ENCODE measurements at regions of chr10 and their contacts with region 1.

Region 1: GRCh38 chr10:119080521-119081260 is at the start of gene EIF3A:
- DNase-seq: peak; percentile 81 to 92
- ATAC-seq: peak; percentile 87 to 90
- H3K4me3 ChIP-seq: peak within 1 kb of the TSS; percentile 77 to 94 (median 92)
- H3K27ac ChIP-seq: peak within 1 kb of the TSS; percentile 95 to 99 (median 97)
- H3K4me1 ChIP-seq: peaks cover 30 to 32% of the 10 kb centered on the region in 2 donors
- H3K27me3 ChIP-seq: no peaks in the 10 kb centered on the region
- CTCF ChIP-seq: peak in 1 of 5 experiments; percentile 9
- POLR2A ChIP-seq: peak; percentile 96 to 97
- total RNA-seq, gene EIF3A: 136 to 240 (median 191) TPM

Region 2: DNA sequence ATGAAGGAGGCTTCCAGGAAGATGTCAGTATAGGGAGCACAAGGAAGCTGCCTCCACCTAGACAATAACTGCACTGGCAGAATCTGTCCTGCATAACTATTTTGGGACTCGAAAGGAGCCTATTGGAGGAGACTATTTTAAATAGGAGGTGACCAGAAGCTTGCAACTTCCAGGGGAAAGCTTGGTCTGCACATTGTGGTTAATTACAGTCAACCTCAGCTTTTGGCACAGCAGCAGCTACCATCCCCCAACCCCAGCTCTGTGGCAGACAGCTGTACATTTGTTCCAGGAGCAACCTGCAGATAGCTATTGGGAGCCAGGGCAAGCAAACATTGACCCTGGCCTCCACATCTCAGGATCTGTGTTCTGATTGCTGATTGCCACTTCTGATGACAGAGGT is 97.4 kb before region 1 on chr10:
- in situ Hi-C with region 1: no loop called
- intact Hi-C with region 1: no loop called
- DNase-seq: no peak
- ATAC-seq: no peak
- H3K4me3 ChIP-seq: no peak overlapping the region
- H3K27ac ChIP-seq: no peak overlapping the region
- H3K4me1 ChIP-seq: no peaks in the 10 kb centered on the region
- H3K27me3 ChIP-seq: no peaks in the 10 kb centered on the region
- CTCF ChIP-seq: no peak
- POLR2A ChIP-seq: no peak

Region 3: DNA sequence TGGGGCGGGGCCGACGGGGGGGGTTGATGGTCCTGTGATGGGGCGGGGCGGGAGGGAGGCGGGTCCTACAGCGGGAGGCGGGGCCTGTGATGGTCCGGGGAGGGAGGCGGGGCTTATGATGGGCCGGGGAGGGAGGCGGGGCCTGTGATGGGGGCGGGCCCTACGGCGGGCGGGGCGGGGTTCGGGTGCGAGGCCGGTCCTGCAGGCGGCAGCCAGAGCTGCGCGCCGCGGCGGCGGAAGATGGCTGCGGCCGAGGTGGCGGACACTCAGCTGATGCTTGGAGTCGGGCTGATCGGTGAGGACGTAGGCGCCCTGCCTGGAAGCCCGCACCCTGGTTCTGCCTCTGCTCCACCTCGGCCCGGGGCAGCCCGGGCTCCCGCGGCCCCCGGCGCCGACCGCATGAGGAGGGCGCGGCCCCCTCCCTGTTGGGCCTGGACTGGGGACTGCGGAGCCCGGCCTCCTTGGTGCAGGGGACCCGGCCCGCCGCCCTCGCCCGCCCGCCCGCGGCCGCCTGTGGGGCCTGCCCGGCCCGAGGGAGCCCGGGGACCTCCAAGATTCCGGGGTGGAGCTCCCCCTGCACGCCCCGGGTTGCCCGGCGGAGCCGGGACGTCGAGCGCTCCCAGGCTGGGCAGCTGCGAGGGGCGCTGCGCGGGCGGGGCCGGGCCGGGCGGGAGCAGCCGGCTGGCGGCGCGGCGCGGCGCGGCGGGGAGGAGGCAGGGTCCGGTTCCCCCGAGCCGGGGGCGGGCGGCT is 23.4 kb after region 1 on chr10 and contains the start of gene DENND10:
- in situ Hi-C with region 1: no loop called
- intact Hi-C with region 1: loop called (anchors 1 kb)
- DNase-seq: peak; percentile 72 to 73
- ATAC-seq: peak; percentile 86 to 90
- H3K4me3 ChIP-seq: peak within 1 kb of the TSS; percentile 60 to 89 (median 79)
- H3K27ac ChIP-seq: peak within 1 kb of the TSS; percentile 72 to 86 (median 84)
- H3K4me1 ChIP-seq: peaks cover 8% of the 10 kb centered on the region in 2 donors
- H3K27me3 ChIP-seq: no peaks in the 10 kb centered on the region
- CTCF ChIP-seq: peak in 1 of 5 experiments; percentile 20
- POLR2A ChIP-seq: peak; percentile 87
- total RNA-seq, gene DENND10: 25.7 to 59.5 (median 43.7) TPM

Measured in gastrocnemius medialis (tissue), 4 donors.